ENCODE measurements at regions of chr7 and their contacts with region 1.

Region 1: DNA sequence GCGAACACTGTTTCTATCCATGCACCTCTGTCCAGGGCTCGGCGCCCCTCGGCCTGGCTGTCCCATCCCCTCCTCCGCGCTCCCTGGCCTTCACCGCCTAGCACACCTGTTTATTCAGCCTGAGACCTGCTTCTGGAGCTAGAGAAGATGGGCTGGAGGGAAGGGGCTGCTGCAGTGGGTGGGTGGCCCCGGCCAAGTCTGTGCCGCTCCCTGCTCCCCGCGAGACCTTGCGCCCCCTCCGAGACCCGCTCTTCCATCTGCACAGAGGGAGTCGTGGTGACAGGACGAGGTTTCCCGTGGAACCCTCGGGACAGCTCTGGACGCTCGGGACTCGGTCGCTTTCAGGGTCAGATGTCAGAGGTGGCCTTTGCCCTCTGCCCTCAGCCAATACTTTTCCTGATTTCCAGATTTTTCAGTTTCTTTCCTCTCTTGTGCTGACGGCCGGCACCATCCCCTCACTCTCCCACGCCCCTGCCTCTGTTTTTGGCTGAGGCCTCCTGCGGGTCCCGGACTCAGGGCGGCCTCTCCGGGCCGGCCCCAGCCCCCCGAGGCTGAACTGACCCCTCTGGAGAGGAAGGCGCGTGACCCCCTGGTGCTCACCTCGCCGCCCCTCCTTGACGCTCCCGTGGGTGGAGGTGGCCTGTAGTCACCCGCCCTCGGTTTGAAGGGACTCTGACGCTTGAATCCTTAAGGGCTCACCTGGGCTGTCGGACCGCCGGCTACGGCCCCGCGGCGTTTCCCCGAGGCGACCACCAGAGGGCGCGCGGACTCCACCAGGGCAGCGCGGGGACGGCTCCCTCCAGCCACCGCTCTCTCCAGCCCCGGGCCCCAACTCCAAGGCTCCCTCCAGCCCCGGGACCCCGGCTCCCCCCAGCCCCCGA is 15.6 kb downstream of the SHH start:
- DNase-seq: peak; percentile 65 to 79 (median 76)
- ATAC-seq: peak; percentile 84
- H3K4me3 ChIP-seq: no peak overlapping the region
- H3K27ac ChIP-seq: no peak overlapping the region
- H3K4me1 ChIP-seq: peaks cover 8% of the 10 kb centered on the region
- H3K27me3 ChIP-seq: peaks cover 0 to 9% of the 10 kb centered on the region in 2 donors
- CTCF ChIP-seq: peak; percentile 71 to 96 (median 87)
- POLR2A ChIP-seq: no peak

Region 2: DNA sequence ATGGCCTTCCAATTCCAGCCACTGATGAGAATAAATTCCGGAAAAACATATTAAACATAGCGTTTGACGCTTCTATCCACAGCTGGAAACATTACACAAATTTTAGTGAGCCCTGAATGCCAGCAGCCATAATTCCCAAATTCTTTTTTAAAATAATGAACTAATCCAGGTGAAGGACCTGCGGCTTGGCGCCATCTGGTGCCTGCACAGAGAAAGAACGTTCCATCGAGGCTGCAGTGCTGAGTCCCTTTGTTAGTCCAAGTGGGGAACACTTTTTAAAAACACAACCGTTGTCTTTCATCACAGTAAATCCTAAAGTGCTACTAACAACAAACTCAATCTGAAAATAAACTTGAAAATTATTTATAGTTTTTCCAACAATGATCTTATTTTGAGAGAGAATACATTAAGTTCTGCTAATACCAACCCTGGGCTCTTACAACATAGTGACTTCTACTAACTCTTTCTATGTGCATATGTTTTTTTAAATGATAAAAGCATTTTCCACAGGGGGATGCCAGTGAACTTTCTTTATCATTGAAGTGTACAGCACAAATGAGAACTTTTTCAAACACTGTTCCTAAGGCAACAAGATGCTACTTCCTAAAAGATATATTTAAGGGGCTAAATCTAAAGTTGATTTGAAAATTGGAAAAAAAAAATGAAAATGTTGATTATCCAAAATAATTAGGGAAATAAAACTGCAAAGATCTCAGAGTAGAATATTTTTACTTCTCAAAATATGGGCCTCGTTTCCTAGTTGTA is 677.0 kb after region 1 on chr7:
- intact Hi-C with region 1: loop called (anchors 5 kb)
- DNase-seq: peak; percentile 42 to 68 (median 52)
- ATAC-seq: no peak
- H3K4me3 ChIP-seq: no peak overlapping the region
- H3K27ac ChIP-seq: no peak overlapping the region
- H3K4me1 ChIP-seq: no peaks in the 10 kb centered on the region
- H3K27me3 ChIP-seq: no peaks in the 10 kb centered on the region
- CTCF ChIP-seq: peak; percentile 41 to 81 (median 66)
- POLR2A ChIP-seq: no peak